CD14-positive monocyte (primary cell): ENCODE measurements at regions of chr3 and their contacts with region 1.

Region 1: DNA sequence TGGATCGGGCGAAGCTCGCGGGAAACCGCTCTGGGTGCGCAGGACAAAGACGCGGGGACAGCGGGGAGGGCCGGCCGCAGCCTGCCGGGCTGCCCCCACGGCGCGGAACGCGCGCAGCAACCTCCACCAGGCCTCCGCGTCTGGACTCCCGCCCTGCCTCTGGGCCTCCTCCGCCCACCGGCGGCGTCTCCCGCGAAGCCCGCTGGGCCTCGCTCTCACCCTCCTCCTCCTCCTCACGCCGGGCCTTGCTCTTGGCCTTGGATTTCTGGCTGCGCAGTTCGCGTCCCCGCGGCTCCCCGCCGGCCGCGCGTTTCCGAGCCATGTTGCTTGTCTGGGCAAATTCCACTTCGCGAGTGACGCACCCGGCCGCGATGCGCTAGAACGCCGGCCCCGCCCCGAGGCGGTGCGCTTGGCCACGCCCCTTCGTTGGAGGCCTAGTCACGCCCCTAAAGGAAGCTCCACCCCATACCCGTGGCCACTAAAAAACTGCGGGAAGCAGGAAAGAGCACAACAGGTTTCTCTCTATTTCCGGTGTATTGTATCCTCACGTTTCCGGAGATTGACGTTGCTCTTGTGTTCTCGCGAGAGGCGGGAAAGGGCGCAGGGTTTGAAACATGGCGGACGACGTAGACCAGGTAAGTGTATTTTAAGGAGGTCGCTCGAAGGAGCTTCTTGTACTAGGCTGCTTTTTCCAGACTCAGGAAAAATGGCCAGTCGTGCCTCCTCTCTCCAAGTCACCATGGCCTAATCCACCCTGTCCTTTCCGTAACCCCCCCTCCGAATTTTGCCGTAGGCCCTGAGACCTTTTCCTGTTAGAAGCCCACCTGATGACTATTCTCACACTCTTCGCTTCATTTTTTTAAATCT is at the starts of genes LSM3 and XPC:
- DNase-seq: peak; percentile 98 to 99 (median 98)
- H3K4me3 ChIP-seq: peak within 1 kb of the TSS; percentile 55 to 93 (median 87)
- H3K4me3 Mint-ChIP-seq: peak within 1 kb of the TSS; percentile 92 to 97
- H3K27ac ChIP-seq: peak within 1 kb of the TSS; percentile 61 to 94
- H3K27ac Mint-ChIP-seq: peak within 1 kb of the TSS; percentile 95 to 100 (median 98)
- H3K4me1 ChIP-seq: peaks cover 14 to 21% of the 10 kb centered on the region in 2 donors
- H3K4me1 Mint-ChIP-seq: peaks cover 34% of the 10 kb centered on the region
- H3K27me3 ChIP-seq: no peaks in the 10 kb centered on the region
- H3K27me3 Mint-ChIP-seq: peaks cover 0 to 5% (median 0%) of the 10 kb centered on the region in 3 donors
- CTCF ChIP-seq: no peak
- polyA plus RNA-seq, gene LSM3: 4.1 to 23.2 (median 19.8) TPM
- polyA plus RNA-seq, gene XPC: 13.4 to 22.0 (median 15.5) TPM

Region 2: DNA sequence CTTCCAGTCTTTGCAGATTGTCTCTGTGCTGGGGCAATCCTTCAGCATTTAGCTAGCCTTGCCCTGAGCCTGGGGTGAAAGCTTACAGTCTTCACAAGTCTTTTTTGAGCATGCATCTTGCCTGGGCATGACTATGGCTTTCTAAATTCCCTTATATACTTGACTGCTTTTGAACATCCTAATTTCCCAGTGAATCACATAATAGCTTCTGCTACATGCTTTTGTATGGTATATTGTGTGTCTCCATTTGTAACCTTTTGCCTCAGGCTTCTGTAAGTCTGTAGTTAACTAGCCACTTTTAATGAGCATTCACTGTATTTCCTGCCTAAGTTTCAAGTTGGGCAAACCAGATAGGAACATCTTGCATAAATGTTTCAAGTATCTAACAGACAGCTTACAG is 130.6 kb before region 1 on chr3:
- intact Hi-C with region 1: no loop called
- DNase-seq: no peak
- H3K4me3 ChIP-seq: no peak overlapping the region
- H3K4me3 Mint-ChIP-seq: no peak overlapping the region
- H3K27ac ChIP-seq: no peak overlapping the region
- H3K27ac Mint-ChIP-seq: no peak overlapping the region
- H3K4me1 ChIP-seq: no peaks in the 10 kb centered on the region
- H3K4me1 Mint-ChIP-seq: no peaks in the 10 kb centered on the region
- H3K27me3 ChIP-seq: no peaks in the 10 kb centered on the region
- H3K27me3 Mint-ChIP-seq: peaks cover 3 to 12% (median 9%) of the 10 kb centered on the region in 3 donors
- CTCF ChIP-seq: no peak

Region 3: GRCh38 chr3:14144423-14145075 is 33.9 kb before region 1 on chr3:
- intact Hi-C with region 1: loop called in 1 of 2 experiments (anchors 5 kb)
- DNase-seq: peak; percentile 95 to 99 (median 98)
- H3K4me3 ChIP-seq: peak overlapping the region; percentile 41 to 61 (median 43)
- H3K4me3 Mint-ChIP-seq: peak overlapping the region; percentile 74 to 90
- H3K27ac ChIP-seq: peak overlapping the region; percentile 100
- H3K27ac Mint-ChIP-seq: peak overlapping the region; percentile 99 to 100 (median 100)
- H3K4me1 ChIP-seq: peaks cover 44 to 53% of the 10 kb centered on the region in 2 donors
- H3K4me1 Mint-ChIP-seq: peaks cover 51% of the 10 kb centered on the region
- H3K27me3 ChIP-seq: no peaks in the 10 kb centered on the region
- H3K27me3 Mint-ChIP-seq: peaks cover 0 to 2% (median 0%) of the 10 kb centered on the region in 3 donors
- CTCF ChIP-seq: no peak

Region 4: DNA sequence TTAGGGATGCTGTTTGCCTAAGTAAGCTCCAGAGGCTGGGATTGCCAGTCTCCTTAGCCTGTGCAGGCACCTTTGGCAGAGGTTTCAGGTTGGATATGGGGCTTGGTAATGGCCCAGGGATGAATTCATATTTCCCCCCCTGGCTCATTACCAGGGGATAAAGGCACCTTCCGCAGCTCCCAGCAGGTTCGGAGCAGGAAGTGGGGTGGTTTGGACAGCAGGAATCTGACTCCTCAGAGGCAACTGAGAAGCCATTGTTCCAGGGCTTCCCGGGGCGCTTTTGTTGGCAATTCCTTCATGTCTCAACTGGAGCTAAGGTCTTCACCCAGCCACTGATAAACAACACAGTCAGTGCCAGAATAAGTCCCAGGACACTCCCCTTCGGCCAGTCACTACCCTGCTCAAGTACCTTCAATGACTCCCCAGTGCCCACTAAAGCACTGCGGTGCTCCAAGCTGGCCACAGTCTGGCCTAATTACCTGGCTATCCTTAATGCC is 138.6 kb after region 1 on chr3:
- intact Hi-C with region 1: no loop called
- DNase-seq: no peak
- H3K4me3 ChIP-seq: no peak overlapping the region
- H3K4me3 Mint-ChIP-seq: no peak overlapping the region
- H3K27ac ChIP-seq: no peak overlapping the region
- H3K27ac Mint-ChIP-seq: no peak overlapping the region
- H3K4me1 ChIP-seq: peaks cover 3 to 7% of the 10 kb centered on the region in 2 donors
- H3K4me1 Mint-ChIP-seq: peaks cover 8% of the 10 kb centered on the region
- H3K27me3 ChIP-seq: no peaks in the 10 kb centered on the region
- H3K27me3 Mint-ChIP-seq: peaks cover 3 to 12% (median 4%) of the 10 kb centered on the region in 3 donors
- CTCF ChIP-seq: no peak

Region 5: GRCh38 chr3:14577897-14578296 is 399.4 kb after region 1 on chr3:
- intact Hi-C with region 1: no loop called
- DNase-seq: no peak
- H3K4me3 ChIP-seq: no peak overlapping the region
- H3K4me3 Mint-ChIP-seq: no peak overlapping the region
- H3K27ac ChIP-seq: no peak overlapping the region
- H3K27ac Mint-ChIP-seq: no peak overlapping the region
- H3K4me1 ChIP-seq: no peaks in the 10 kb centered on the region
- H3K4me1 Mint-ChIP-seq: no peaks in the 10 kb centered on the region
- H3K27me3 ChIP-seq: no peaks in the 10 kb centered on the region
- H3K27me3 Mint-ChIP-seq: peaks cover 0 to 6% (median 4%) of the 10 kb centered on the region in 3 donors
- CTCF ChIP-seq: no peak

Region 6: GRCh38 chr3:14651440-14652251 is 473.2 kb after region 1 on chr3 and contains the start of gene CCDC174:
- intact Hi-C with region 1: loop called in 1 of 2 experiments (anchors 5 kb)
- DNase-seq: peak; percentile 99 to 100 (median 99)
- H3K4me3 ChIP-seq: peak within 1 kb of the TSS; percentile 88 to 93 (median 89)
- H3K4me3 Mint-ChIP-seq: peak within 1 kb of the TSS; percentile 94 to 97
- H3K27ac ChIP-seq: peak within 1 kb of the TSS; percentile 94 to 97
- H3K27ac Mint-ChIP-seq: peak within 1 kb of the TSS; percentile 97 to 99 (median 98)
- H3K4me1 ChIP-seq: peaks cover 21 to 39% of the 10 kb centered on the region in 2 donors
- H3K4me1 Mint-ChIP-seq: peaks cover 37% of the 10 kb centered on the region
- H3K27me3 ChIP-seq: no peaks in the 10 kb centered on the region
- H3K27me3 Mint-ChIP-seq: peaks cover 0 to 3% (median 2%) of the 10 kb centered on the region in 3 donors
- CTCF ChIP-seq: no peak
- polyA plus RNA-seq, gene CCDC174: 6.2 to 7.9 (median 7.4) TPM